H1 (cell line): ENCODE measurements at regions of chr19 and their contacts with region 1.

Region 1: GRCh38 chr19:10510301-10510802 is 6.9 kb downstream of the S1PR5 start:
- DNase-seq: peak in 1 of 2 experiments; percentile 98
- H3K4me3 ChIP-seq: no peak overlapping the region; a peak in 1 of 8 replicates
- H3K27ac ChIP-seq: no peak overlapping the region
- H3K4me1 ChIP-seq: peaks cover 0 to 15% (median 8%) of the 10 kb centered on the region in 4 experiments; a peak in 6 of 7 replicates
- H3K27me3 ChIP-seq: peaks cover 24 to 30% (median 29%) of the 10 kb centered on the region in 4 experiments; a peak in 6 of 7 replicates
- CTCF ChIP-seq: peak; percentile 64 to 81 (median 77)
- EP300 ChIP-seq: no peak
- POLR2A ChIP-seq: no peak
- RAD21 ChIP-seq: peak; percentile 27 to 55; a peak in 3 of 4 replicates

Region 2: DNA sequence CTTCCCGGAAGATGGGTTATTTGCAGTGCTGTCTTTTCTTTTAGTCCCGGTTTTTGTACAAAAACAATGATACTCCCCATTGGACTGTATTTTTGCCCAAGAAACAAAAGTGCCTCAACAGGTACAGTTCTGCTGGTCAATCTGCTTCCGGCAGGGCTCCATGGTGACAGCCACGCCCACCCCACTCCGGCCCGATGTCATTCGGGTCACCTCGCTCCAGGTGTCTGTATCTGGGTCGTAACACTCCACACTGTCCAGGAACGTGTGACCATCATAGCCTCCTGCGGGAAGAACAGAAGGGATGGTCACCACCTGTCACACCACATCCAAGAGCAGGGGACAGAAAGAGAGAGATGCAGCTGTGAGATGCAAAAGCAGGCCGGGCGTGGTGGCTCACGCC is 23.8 kb before region 1 on chr19:
- CTCF ChIA-PET with region 1: interaction called, 36 read pairs
- POLR2A ChIA-PET with region 1: no interaction called
- DNase-seq: no peak
- H3K4me3 ChIP-seq: no peak overlapping the region
- H3K27ac ChIP-seq: no peak overlapping the region
- H3K4me1 ChIP-seq: no peaks in the 10 kb centered on the region
- H3K27me3 ChIP-seq: no peaks in the 10 kb centered on the region
- CTCF ChIP-seq: no peak
- EP300 ChIP-seq: no peak
- POLR2A ChIP-seq: no peak
- RAD21 ChIP-seq: no peak

Region 3: GRCh38 chr19:10543420-10544241 is 33.3 kb after region 1 on chr19 and contains the start of gene ATG4D:
- CTCF ChIA-PET with region 1: interaction called, 10 read pairs
- POLR2A ChIA-PET with region 1: interaction called, 4 read pairs
- DNase-seq: peak; percentile 82 to 91
- H3K4me3 ChIP-seq: peak within 1 kb of the TSS; percentile 57 to 99 (median 88)
- H3K27ac ChIP-seq: peak within 1 kb of the TSS; percentile 2; the same call in 1 of the 2 replicates
- H3K4me1 ChIP-seq: peaks cover 0 to 4% (median 3%) of the 10 kb centered on the region in 4 experiments; a peak in 4 of 7 replicates
- H3K27me3 ChIP-seq: no peaks in the 10 kb centered on the region
- CTCF ChIP-seq: peak in 1 of 3 experiments; percentile 20; a peak in 1 of 4 replicates
- EP300 ChIP-seq: no peak
- POLR2A ChIP-seq: peak; percentile 68 to 88
- RAD21 ChIP-seq: no peak
- total RNA-seq, gene ATG4D: 43.7 and 51.4 TPM in 2 replicates